ENCODE measurements at regions of chr2 and their contacts with region 1.

Region 1: DNA sequence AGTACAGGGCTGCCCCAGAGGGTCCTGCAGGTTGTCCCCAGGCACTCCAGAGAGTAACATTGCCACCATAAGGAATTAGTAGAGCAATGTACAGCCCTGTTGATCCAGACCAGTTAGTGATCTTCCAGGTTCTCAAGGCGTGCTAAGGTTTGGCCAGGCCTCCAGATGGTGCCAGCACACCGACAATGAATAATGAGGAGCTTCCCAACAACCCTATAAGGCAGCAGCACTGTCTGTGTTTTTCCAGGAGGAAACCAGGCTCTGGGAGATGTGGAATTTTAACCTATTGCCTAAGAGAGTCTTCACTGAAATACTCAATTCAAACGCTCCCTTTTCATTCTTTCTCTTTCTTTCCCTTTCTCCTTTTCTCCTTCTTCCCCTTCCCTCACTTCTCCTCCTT is 122.1 kb downstream of the MGAT5 start:
- DNase-seq: peak in 1 of 3 donors; percentile 47
- ATAC-seq: peak; percentile 68 to 69
- H3K4me3 ChIP-seq: no peak overlapping the region
- H3K27ac ChIP-seq: no peak overlapping the region
- H3K4me1 ChIP-seq: peaks cover 23% of the 10 kb centered on the region
- H3K27me3 ChIP-seq: no peaks in the 10 kb centered on the region

Region 2: GRCh38 chr2:134181210-134181609 is 194.7 kb before region 1 on chr2:
- intact Hi-C with region 1: no loop called
- DNase-seq: no peak
- ATAC-seq: no peak
- H3K4me3 ChIP-seq: no peak overlapping the region
- H3K27ac ChIP-seq: no peak overlapping the region
- H3K4me1 ChIP-seq: peaks cover 29% of the 10 kb centered on the region
- H3K27me3 ChIP-seq: no peaks in the 10 kb centered on the region

Region 3: GRCh38 chr2:134275058-134275862 is 100.7 kb before region 1 on chr2:
- intact Hi-C with region 1: no loop called
- DNase-seq: peak in 1 of 3 donors; percentile 51
- ATAC-seq: no peak
- H3K4me3 ChIP-seq: no peak overlapping the region
- H3K27ac ChIP-seq: no peak overlapping the region
- H3K4me1 ChIP-seq: peaks cover 4% of the 10 kb centered on the region
- H3K27me3 ChIP-seq: no peaks in the 10 kb centered on the region

Region 4: DNA sequence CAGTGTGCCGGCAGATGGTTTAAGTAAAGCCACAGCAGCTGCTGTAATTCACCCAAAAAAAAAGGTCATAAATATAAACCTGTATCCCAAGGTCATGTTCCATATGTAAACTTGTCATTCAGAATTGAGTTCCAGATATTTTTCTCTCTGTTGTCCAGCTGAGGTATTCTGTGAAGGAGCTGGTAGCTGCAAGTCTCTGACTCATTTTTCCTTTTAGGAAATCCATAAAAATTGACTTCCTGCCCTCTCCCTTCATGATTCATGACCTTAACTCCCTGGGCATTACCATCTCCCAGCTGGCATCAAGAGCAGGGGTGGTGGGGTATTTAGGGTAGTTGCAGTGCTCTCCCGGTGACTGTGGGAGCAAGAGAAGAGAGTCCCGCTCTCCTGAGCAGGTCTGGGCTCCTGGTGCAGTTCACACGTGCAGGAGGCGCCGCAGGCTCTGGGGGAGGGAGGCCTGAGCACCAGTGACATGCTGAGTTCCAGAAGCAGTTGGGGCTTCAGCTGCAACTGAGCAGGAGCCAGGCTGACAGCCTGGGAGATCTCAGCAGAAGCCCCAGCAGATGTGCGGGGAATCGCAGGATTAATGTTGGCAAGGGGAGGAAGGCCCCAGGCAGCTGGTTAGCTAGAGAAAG is 70.6 kb after region 1 on chr2:
- intact Hi-C with region 1: loop called in 1 of 4 experiments (anchors 10 kb)
- DNase-seq: no peak
- ATAC-seq: no peak
- H3K4me3 ChIP-seq: no peak overlapping the region
- H3K27ac ChIP-seq: peak overlapping the region; percentile 12
- H3K4me1 ChIP-seq: peaks cover 9% of the 10 kb centered on the region
- H3K27me3 ChIP-seq: no peaks in the 10 kb centered on the region